WTC11 (cell line): ENCODE measurements at regions of chr17 and their contacts with region 1.

Region 1: GRCh38 chr17:50269477-50270434 is 4.5 kb upstream of the TMEM92 start:
- DNase-seq: peak; percentile 81
- ATAC-seq: peak; percentile 54
- H3K4me3 Mint-ChIP-seq: no peak overlapping the region
- H3K27ac Mint-ChIP-seq: no peak overlapping the region
- H3K4me1 Mint-ChIP-seq: peaks cover 38% of the 10 kb centered on the region
- H3K27me3 Mint-ChIP-seq: peaks cover 12% of the 10 kb centered on the region
- CTCF ChIP-seq: peak; percentile 61

Region 2: GRCh38 chr17:50037321-50038071 is 232.3 kb before region 1 on chr17:
- CTCF ChIA-PET with region 1: no interaction called
- POLR2A ChIA-PET with region 1: no interaction called
- DNase-seq: no peak
- ATAC-seq: peak; percentile 23
- H3K4me3 Mint-ChIP-seq: no peak overlapping the region
- H3K27ac Mint-ChIP-seq: no peak overlapping the region
- H3K4me1 Mint-ChIP-seq: peaks cover 11% of the 10 kb centered on the region
- H3K27me3 Mint-ChIP-seq: peaks cover 5% of the 10 kb centered on the region
- CTCF ChIP-seq: no peak

Region 3: GRCh38 chr17:50283246-50283645 is 13.5 kb after region 1 on chr17:
- CTCF ChIA-PET with region 1: interaction called, 38 read pairs
- POLR2A ChIA-PET with region 1: interaction called, 3 read pairs
- DNase-seq: no peak
- ATAC-seq: no peak
- H3K4me3 Mint-ChIP-seq: no peak overlapping the region
- H3K27ac Mint-ChIP-seq: no peak overlapping the region
- H3K4me1 Mint-ChIP-seq: peaks cover 39% of the 10 kb centered on the region
- H3K27me3 Mint-ChIP-seq: peaks cover 6% of the 10 kb centered on the region; the same call in 1 of the 2 replicates
- CTCF ChIP-seq: no peak

Region 4: DNA sequence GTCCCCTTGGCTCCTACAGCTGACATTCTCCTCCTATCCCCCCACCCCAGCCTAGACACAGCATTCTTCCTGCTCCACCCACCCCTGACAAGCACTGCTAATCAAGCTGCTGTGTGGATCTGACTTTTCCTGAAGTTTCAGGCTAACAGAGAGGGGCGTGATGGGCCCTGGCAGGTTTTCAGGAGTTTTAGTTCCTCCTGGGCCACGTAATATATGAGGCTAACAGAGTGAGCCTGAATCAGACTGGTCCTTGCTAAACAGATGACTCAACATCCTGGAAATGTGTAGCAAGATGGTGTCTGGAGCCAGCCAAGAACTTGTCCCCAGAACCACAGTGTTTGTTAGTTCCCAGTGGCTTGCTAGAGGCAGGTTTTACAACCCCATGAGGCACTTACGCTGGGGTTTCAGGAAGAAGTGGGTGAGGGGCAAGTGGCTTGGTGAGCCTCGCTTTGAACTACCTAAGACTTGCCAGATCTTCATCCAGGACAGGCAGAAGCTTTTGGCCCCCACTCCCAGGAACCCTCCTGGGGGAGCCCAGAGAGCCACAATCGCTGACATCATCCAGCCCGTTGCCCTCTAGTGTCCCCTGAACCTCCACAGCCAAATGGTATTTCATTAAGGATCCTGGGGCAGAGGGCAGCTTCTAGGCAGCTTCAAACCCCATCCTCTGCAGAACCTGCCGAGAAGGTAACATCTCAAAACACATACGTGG is 20.4 kb after region 1 on chr17:
- CTCF ChIA-PET with region 1: interaction called, 38 read pairs
- POLR2A ChIA-PET with region 1: interaction called, 4 read pairs
- DNase-seq: no peak
- ATAC-seq: peak; percentile 26
- H3K4me3 Mint-ChIP-seq: no peak overlapping the region
- H3K27ac Mint-ChIP-seq: no peak overlapping the region
- H3K4me1 Mint-ChIP-seq: peaks cover 17% of the 10 kb centered on the region; the same call in 1 of the 2 replicates
- H3K27me3 Mint-ChIP-seq: no peaks in the 10 kb centered on the region; the same call in 1 of the 2 replicates
- CTCF ChIP-seq: no peak

Region 5: DNA sequence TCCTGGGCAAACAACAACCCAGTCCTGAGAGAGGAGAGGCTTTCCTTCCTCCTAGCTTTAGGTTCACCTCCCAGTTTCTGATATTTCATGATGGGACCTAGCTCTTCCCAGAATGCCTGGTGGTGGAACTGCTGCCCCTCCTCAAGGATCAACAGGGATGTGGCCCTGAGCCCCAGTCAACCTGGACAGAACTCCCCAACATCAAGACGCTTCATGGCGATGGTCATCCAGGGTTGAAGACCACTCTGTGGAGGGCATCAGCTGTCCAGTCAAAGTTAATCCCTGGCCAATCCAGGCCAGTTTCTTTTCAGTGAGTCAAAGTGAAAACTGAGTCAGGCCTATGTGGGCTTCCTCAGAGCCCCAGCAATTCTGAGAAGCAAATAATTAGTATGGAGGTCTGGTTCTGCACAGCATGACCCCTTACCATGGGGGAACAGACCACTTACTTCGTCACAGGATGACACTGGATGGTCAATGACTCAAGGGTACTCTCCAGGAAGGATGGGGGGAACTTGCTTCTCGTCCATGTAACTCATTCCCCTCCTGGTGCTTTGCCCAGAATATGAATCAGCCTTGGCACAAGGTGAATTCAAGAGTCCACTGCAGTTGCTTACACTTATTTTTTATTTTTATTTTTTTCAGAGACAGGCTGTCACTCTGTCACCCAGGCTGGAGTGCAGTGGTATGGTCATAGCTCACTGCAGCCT is 61.5 kb after region 1 on chr17:
- CTCF ChIA-PET with region 1: interaction called, 31 read pairs
- POLR2A ChIA-PET with region 1: no interaction called
- DNase-seq: no peak
- ATAC-seq: no peak
- H3K4me3 Mint-ChIP-seq: no peak overlapping the region
- H3K27ac Mint-ChIP-seq: no peak overlapping the region
- H3K4me1 Mint-ChIP-seq: peaks cover 17% of the 10 kb centered on the region
- H3K27me3 Mint-ChIP-seq: no peaks in the 10 kb centered on the region
- CTCF ChIP-seq: no peak

Region 6: GRCh38 chr17:50452610-50453300 is 183.0 kb after region 1 on chr17:
- CTCF ChIA-PET with region 1: no interaction called
- POLR2A ChIA-PET with region 1: no interaction called
- DNase-seq: no peak
- ATAC-seq: no peak
- H3K4me3 Mint-ChIP-seq: no peak overlapping the region
- H3K27ac Mint-ChIP-seq: no peak overlapping the region
- H3K4me1 Mint-ChIP-seq: no peaks in the 10 kb centered on the region
- H3K27me3 Mint-ChIP-seq: no peaks in the 10 kb centered on the region
- CTCF ChIP-seq: no peak